ENCODE measurements at regions of chr2 and their contacts with region 1.

Region 1: DNA sequence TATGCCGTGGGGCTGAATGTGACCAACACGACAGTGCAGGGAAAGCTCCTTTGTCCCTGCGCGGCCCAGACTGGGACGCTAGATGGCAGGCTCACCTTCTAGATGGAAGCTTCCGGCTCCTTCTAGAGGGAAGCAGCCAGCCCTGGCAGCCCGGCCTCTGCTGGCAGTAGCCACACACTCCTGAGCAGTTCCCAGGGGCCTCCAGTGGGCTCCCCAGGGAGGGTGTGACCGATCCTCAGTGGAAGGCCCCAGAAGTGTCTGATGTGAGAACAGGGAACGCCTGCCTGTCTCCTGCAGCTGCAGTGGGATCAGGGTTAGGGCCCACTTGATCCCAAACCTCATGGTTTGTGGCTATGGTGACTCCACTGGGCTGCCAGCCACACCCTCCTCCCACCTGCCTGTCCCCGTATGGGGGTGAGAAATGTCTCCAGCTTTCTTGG is 48.5 kb upstream of the LRPPRC start:
- DNase-seq: peak; percentile 90
- H3K4me3 ChIP-seq: no peak overlapping the region
- H3K27ac ChIP-seq: no peak overlapping the region
- H3K4me1 ChIP-seq: peaks cover 0 to 6% of the 10 kb centered on the region in 2 experiments; a peak in 1 of 4 replicates
- H3K27me3 ChIP-seq: no peaks in the 10 kb centered on the region
- CTCF ChIP-seq: peak; percentile 91
- EP300 ChIP-seq: peak in 1 of 2 experiments; percentile 76; a peak in 2 of 4 replicates
- RAD21 ChIP-seq: peak; percentile 97

Region 2: GRCh38 chr2:44061876-44062275 is 17.6 kb after region 1 on chr2:
- CTCF ChIA-PET with region 1: interaction called, 65 read pairs
- POLR2A ChIA-PET with region 1: no interaction called
- DNase-seq: no peak
- H3K4me3 ChIP-seq: no peak overlapping the region
- H3K27ac ChIP-seq: no peak overlapping the region
- H3K4me1 ChIP-seq: no peaks in the 10 kb centered on the region
- H3K27me3 ChIP-seq: peaks cover 4% of the 10 kb centered on the region; the same call in 1 of the 2 replicates
- CTCF ChIP-seq: no peak
- EP300 ChIP-seq: no peak
- RAD21 ChIP-seq: no peak

Region 3: DNA sequence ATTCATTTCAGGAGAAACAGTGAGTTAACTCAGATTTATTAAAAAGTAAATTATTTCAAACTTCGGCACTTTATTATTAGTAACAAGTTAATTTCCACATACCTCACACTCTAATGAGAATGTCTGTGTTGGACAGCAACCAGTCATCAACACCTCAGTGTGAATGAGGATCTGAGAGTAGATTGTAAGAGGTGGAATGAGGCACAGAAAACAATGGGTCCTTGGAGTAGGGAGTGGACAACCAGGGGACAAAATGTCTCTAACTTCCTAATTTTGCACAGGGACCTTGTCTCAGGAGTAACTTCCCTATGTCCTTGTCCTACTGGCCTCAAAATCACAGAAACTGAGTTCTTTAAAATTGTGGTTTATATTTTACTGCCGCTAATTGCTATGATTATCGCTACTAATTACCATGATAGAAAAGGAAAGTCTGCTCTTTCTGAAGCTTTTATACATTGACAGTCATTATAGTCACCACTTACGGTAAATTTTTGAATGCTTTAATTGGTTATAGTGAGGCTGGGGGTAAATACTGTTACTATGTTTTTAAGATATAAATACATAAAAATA is 33.7 kb after region 1 on chr2:
- CTCF ChIA-PET with region 1: interaction called, 19 read pairs
- POLR2A ChIA-PET with region 1: no interaction called
- DNase-seq: no peak
- H3K4me3 ChIP-seq: no peak overlapping the region
- H3K27ac ChIP-seq: no peak overlapping the region
- H3K4me1 ChIP-seq: no peaks in the 10 kb centered on the region; a peak in 1 of 4 replicates
- H3K27me3 ChIP-seq: no peaks in the 10 kb centered on the region
- CTCF ChIP-seq: no peak
- EP300 ChIP-seq: no peak
- RAD21 ChIP-seq: no peak

Region 4: GRCh38 chr2:44167940-44168680 is 123.8 kb after region 1 on chr2:
- CTCF ChIA-PET with region 1: interaction called, 11 read pairs
- POLR2A ChIA-PET with region 1: no interaction called
- DNase-seq: peak; percentile 95
- H3K4me3 ChIP-seq: peak overlapping the region; percentile 74 to 77
- H3K27ac ChIP-seq: peak overlapping the region; percentile 95 to 99
- H3K4me1 ChIP-seq: peaks cover 4 to 16% of the 10 kb centered on the region in 2 experiments
- H3K27me3 ChIP-seq: no peaks in the 10 kb centered on the region
- CTCF ChIP-seq: no peak
- EP300 ChIP-seq: no peak; a peak in 1 of 4 replicates
- RAD21 ChIP-seq: no peak

Region 5: GRCh38 chr2:44254023-44254422 is 209.7 kb after region 1 on chr2:
- CTCF ChIA-PET with region 1: interaction called, 13 read pairs
- POLR2A ChIA-PET with region 1: no interaction called
- DNase-seq: no peak
- H3K4me3 ChIP-seq: no peak overlapping the region
- H3K27ac ChIP-seq: no peak overlapping the region
- H3K4me1 ChIP-seq: no peaks in the 10 kb centered on the region
- H3K27me3 ChIP-seq: no peaks in the 10 kb centered on the region
- CTCF ChIP-seq: no peak
- EP300 ChIP-seq: no peak
- RAD21 ChIP-seq: no peak

Region 6: GRCh38 chr2:44301111-44301510 is 256.8 kb after region 1 on chr2:
- CTCF ChIA-PET with region 1: interaction called, 15 read pairs
- POLR2A ChIA-PET with region 1: no interaction called
- DNase-seq: no peak
- H3K4me3 ChIP-seq: no peak overlapping the region
- H3K27ac ChIP-seq: no peak overlapping the region
- H3K4me1 ChIP-seq: no peaks in the 10 kb centered on the region
- H3K27me3 ChIP-seq: no peaks in the 10 kb centered on the region
- CTCF ChIP-seq: no peak
- EP300 ChIP-seq: no peak
- RAD21 ChIP-seq: no peak

Region 7: DNA sequence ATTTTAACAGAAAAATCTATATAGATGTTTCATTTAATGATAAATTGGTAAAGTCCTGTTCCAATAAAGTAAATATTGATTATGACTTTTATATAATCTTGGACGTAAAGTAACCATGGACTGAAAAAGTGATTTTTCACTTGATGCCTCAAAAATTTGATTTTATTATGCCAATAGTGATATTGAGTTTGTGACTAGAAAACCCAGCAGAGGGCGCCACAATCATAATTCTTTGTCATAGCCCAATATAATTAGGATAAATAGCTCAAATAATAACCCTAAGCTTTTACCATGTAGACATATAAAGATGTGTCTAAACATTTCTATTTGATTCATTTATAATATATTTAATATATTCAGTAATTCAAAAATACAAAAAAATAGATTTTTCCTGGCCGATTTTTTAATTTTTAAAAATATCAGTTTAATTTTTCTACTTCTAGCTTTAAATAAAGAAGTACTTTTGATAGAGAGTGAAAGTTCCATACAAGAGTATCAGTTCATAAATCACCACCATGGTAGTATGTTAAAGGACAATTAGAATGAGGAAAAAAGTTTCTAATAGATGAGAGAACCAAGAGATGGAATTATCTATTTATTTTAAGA is 348.1 kb after region 1 on chr2:
- CTCF ChIA-PET with region 1: interaction called, 55 read pairs
- POLR2A ChIA-PET with region 1: no interaction called
- DNase-seq: peak; percentile 41
- H3K4me3 ChIP-seq: peak overlapping the region in 1 of 2 experiments; percentile 24; a peak in 1 of 4 replicates
- H3K27ac ChIP-seq: no peak overlapping the region
- H3K4me1 ChIP-seq: peaks cover 0 to 4% of the 10 kb centered on the region in 2 experiments; a peak in 2 of 4 replicates
- H3K27me3 ChIP-seq: no peaks in the 10 kb centered on the region
- CTCF ChIP-seq: peak; percentile 91
- EP300 ChIP-seq: no peak
- RAD21 ChIP-seq: peak; percentile 86